ENCODE measurements at regions of chr17 and their contacts with region 1.

Region 1: DNA sequence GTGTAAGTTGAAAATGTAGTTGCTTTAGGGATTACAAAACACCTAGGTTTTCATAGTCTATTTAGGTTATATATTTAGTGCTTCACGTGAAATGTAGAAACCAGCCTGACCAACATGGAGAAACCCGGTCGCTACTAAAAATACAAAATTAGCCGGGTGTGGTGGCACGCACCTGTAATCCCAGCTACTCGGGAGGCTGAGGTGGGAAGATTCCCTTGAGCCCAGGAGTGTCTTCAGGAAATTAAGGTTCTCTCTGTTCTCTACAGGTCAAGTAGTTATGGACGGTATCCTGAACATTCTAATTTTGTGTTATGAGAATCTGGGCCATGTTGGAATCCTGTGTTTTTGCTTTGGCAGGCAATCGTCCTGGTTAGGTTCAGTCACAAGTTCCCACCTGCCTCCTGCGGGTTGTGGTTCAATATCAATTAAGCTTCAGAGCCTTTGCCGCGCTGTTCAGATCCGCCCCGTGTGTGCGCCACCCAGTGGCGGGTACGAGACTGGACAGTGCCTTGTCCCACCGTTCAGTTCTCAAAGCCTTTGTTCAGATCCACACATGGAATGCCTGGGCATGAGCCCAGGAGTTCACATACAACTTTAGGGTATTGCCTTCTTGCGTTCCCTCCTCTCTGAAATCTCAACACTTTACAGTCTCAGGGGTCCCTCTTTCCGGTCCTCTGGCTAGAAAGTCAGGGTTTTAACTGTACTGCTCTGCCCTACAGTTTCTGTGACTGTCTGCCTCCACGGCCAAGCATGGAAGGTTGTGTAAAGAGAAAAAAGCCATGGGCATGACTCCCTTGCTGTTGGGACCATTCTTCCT is 41.7 kb downstream of the HEATR6 start:
- DNase-seq: peak; percentile 63 to 69 (median 67)
- H3K4me3 ChIP-seq: no peak overlapping the region
- H3K4me3 Mint-ChIP-seq: no peak overlapping the region
- H3K27ac ChIP-seq: no peak overlapping the region
- H3K27ac Mint-ChIP-seq: peak overlapping the region in 2 of 7 donors; percentile 13 to 53
- H3K4me1 ChIP-seq: no peaks in the 10 kb centered on the region
- H3K4me1 Mint-ChIP-seq: peaks cover 5% of the 10 kb centered on the region in 4 donors
- H3K27me3 ChIP-seq: peaks cover 4% of the 10 kb centered on the region
- H3K27me3 Mint-ChIP-seq: peaks cover 10 to 12% of the 10 kb centered on the region in 2 donors

Region 2: DNA sequence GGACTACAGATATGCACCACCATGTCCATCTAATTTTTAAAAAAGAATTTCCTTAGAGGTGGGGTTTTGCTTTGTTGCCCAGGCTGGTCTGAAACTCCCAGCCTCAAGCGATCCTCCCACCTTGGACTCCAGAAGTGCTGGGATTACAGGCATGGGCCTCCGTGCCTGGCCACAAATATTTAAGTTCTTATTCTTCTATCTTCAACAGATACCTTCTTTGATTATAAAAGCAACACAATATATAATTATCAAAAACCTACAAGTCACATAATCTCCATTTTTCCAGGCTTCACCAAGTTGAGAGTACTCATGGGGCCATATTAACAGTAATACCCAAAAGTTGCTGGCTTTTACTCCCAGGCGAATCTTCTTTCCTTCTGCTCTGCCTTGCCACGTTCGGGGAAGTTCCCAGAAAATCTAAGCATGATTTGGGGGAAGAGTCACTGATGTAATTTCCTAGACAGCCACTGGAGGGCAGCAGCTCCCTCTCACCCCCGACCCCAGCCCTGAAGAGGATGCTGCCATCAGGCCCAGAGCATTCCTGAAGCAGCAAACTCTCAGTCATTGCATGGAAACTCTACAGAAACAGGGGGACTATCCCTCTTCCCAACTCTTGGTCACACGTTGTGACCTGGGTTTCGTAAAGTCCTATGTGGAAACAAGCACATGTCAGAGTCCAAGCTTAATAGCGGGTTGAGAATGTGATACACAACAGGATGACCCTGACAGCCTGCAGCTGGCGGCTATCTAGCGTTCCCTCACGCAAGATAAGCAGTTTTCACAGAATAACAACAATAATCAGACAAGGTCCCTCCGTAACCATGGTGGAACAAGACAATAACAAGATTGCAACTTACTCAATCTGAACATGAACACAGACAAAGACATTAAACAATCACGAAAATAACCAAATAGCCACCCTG is 515.5 kb before region 1 on chr17:
- CTCF ChIA-PET with region 1: no interaction called
- POLR2A ChIA-PET with region 1: no interaction called
- intact Hi-C with region 1: loop called (anchors 5 kb)
- DNase-seq: peak; percentile 40 to 51 (median 46)
- H3K4me3 ChIP-seq: no peak overlapping the region
- H3K4me3 Mint-ChIP-seq: no peak overlapping the region
- H3K27ac ChIP-seq: no peak overlapping the region
- H3K27ac Mint-ChIP-seq: no peak overlapping the region
- H3K4me1 ChIP-seq: no peaks in the 10 kb centered on the region
- H3K4me1 Mint-ChIP-seq: peaks cover 0 to 6% (median 1%) of the 10 kb centered on the region in 4 donors
- H3K27me3 ChIP-seq: no peaks in the 10 kb centered on the region
- H3K27me3 Mint-ChIP-seq: peaks cover 8 to 14% of the 10 kb centered on the region in 2 donors

Region 3: GRCh38 chr17:59746849-59747445 is 290.1 kb before region 1 on chr17:
- CTCF ChIA-PET with region 1: interaction called, 76 read pairs
- POLR2A ChIA-PET with region 1: no interaction called
- intact Hi-C with region 1: loop called (anchors 5 kb)
- DNase-seq: peak in 4 of 5 donors; percentile 33 to 38 (median 36)
- H3K4me3 ChIP-seq: no peak overlapping the region
- H3K4me3 Mint-ChIP-seq: no peak overlapping the region
- H3K27ac ChIP-seq: no peak overlapping the region
- H3K27ac Mint-ChIP-seq: no peak overlapping the region
- H3K4me1 ChIP-seq: peaks cover 4% of the 10 kb centered on the region
- H3K4me1 Mint-ChIP-seq: peaks cover 3 to 8% (median 3%) of the 10 kb centered on the region in 4 donors
- H3K27me3 ChIP-seq: no peaks in the 10 kb centered on the region
- H3K27me3 Mint-ChIP-seq: no peaks in the 10 kb centered on the region

Region 4: DNA sequence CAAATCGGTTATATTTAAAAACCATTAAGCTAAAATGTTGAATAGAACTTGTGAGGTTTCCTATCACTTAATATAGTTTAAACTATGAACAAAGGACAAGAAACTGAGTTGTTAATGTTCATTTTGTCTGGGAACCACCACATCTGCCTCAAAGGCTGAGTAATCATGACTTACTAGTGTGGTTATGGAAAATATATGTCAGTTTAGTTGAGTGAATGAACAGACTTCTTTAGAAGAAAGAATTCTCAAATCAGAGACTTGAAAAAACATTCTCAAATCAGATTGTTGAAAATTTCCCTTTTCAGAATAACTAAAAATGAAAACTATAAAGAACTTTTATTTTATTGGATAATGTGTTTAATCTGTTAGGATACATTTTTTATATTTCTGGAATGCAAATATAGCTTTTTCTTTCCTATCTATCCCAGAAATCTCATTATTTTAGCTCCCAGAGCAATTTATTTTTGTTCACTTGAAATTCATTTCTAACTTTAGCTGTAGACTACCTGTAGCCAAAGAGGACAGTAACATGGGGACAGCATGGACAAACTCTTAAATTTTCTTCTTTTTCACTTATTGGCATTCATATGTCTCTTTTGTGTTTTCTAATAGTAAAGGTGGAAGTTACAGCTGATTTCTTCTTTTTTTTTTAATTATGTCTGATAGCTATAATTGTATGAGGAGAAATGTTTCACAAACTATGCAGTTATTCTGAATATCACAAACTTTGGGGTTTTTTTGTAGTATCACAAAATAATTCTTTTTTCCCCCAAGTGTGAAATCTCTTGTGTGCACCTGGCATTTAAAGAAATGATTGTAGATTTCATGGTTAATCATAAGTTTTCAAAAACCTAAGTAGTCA is 274.3 kb before region 1 on chr17:
- CTCF ChIA-PET with region 1: no interaction called
- POLR2A ChIA-PET with region 1: no interaction called
- intact Hi-C with region 1: no loop called
- DNase-seq: no peak
- H3K4me3 ChIP-seq: no peak overlapping the region
- H3K4me3 Mint-ChIP-seq: peak overlapping the region in 1 of 8 donors; percentile 29
- H3K27ac ChIP-seq: no peak overlapping the region
- H3K27ac Mint-ChIP-seq: peak overlapping the region in 3 of 7 donors; percentile 6 to 86 (median 57)
- H3K4me1 ChIP-seq: peaks cover 13% of the 10 kb centered on the region
- H3K4me1 Mint-ChIP-seq: peaks cover 10 to 16% (median 13%) of the 10 kb centered on the region in 4 donors
- H3K27me3 ChIP-seq: no peaks in the 10 kb centered on the region
- H3K27me3 Mint-ChIP-seq: no peaks in the 10 kb centered on the region